Activated CD8-positive, alpha-beta memory T cell treated with anti-CD3 and anti-CD28 coated beads, Interleukin-2, amount 10 ng/mL, durations not matched to agents 7 days and 5 days (primary cell): ENCODE measurements at regions of chr3 and their contacts with region 1.

Region 1: GRCh38 chr3:33440323-33441232 is at the start of gene UBP1:
- DNase-seq: peak; percentile 99
- ATAC-seq: peak; percentile 89
- H3K4me3 Mint-ChIP-seq: peak within 1 kb of the TSS; percentile 95
- H3K27ac Mint-ChIP-seq: peak within 1 kb of the TSS; percentile 100
- H3K4me1 Mint-ChIP-seq: peaks cover 41% of the 10 kb centered on the region
- H3K27me3 Mint-ChIP-seq: no peaks in the 10 kb centered on the region
- total RNA-seq, gene UBP1: 60.5 to 71.8 TPM

Region 2: DNA sequence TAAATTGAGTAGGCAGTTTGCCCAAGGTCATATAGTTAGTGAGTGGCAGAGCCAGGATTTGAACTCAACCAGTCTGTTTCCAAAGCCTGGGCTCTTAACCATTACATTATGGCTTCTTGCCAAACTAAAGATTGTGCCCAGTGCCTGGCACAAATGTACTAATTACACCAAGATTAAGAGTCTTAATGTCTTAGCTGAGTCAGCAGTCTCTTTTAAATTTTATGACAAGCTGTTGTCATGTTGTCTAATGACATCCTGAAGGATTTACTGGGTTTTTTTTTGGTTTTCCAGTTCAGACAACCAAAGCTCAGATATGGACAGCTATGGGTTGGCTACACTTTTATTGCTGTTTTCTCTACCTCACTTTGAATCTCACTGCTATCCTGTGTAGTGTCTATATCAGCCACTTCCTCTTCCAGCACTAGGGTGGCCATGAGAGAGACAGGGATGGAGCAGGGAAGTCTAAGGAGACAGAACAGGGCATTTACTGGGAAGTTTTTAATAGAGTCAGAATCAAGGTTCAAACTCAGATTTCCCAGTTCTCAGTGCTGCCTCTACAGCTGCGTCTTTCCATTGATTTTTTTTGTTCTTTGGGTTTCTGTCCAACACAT is 152.8 kb before region 1 on chr3:
- CTCF ChIA-PET with region 1: no interaction called
- DNase-seq: no peak
- ATAC-seq: no peak
- H3K4me3 Mint-ChIP-seq: no peak overlapping the region
- H3K27ac Mint-ChIP-seq: no peak overlapping the region
- H3K4me1 Mint-ChIP-seq: no peaks in the 10 kb centered on the region
- H3K27me3 Mint-ChIP-seq: peaks cover 34% of the 10 kb centered on the region

Region 3: DNA sequence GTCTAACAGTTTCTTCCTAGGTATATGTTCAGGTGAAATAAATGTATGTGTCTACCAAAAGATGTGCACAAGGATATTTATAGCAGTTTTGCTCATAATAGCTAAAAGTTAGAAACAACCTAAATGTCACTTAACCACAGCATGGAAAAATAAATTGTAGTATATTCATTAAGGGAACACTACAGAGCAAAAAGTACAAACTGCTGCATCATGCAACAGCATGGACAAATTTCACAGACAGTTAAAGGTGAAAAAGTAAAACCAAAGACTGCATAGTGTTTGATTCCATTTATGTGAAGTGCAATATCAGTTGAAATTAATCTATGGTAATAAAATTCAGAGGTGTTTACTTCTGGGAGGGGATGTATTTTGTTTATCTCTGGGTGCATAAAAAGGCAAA is 100.8 kb before region 1 on chr3:
- CTCF ChIA-PET with region 1: no interaction called
- DNase-seq: no peak
- ATAC-seq: no peak
- H3K4me3 Mint-ChIP-seq: no peak overlapping the region
- H3K27ac Mint-ChIP-seq: no peak overlapping the region
- H3K4me1 Mint-ChIP-seq: no peaks in the 10 kb centered on the region
- H3K27me3 Mint-ChIP-seq: peaks cover 4% of the 10 kb centered on the region

Region 4: DNA sequence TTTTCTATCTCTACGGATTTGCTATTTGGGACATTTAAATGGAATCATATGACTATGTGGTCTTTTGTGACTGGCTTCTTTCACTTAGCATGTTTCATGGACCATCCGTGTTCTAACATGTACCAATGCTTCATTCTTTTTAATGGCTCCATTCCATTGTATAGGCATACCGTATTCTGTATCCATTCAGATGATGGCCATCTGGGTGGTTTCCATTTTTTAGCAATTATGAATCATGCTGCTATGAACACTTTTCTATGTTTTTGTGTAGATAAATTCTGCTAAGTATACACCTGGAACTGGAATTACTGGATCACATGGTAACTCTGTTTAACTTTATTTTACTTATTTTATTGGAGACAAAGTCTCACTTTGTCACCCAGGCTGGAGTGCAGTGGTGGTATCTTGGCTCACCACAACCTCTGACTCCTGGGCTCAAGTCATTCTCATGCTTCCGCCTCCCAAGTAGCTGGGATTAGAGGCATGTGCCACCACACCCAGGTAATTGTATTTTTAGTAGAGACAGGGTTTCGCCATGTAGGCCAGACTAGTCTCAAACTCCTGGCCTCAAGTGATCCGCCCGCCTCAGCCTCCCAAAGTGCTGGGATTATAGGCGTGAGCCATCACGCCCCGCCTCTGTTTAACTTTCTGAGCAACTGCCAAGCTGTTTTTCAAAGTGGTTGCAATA is 13.8 kb before region 1 on chr3:
- CTCF ChIA-PET with region 1: interaction called, 16 read pairs
- DNase-seq: no peak
- ATAC-seq: no peak
- H3K4me3 Mint-ChIP-seq: no peak overlapping the region
- H3K27ac Mint-ChIP-seq: no peak overlapping the region
- H3K4me1 Mint-ChIP-seq: peaks cover 36% of the 10 kb centered on the region
- H3K27me3 Mint-ChIP-seq: no peaks in the 10 kb centered on the region

Region 5: DNA sequence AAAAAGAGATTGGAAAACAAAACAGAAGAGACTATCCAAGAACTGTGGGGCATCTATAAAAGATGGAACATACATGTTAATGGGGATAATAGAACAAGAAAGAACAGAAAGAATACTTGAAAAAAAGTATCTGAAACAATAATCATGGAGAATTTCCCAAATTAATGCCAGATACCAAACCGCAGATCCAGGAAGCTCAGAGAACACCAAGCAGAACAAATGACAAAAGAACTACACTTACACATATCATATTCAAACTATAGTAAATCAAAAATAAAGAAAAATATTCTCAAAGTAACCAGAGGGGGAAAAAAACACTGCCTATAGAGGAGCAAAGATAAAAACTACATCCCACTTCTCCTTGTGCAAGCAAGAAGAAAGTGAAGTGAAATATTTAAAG is 237.5 kb after region 1 on chr3:
- CTCF ChIA-PET with region 1: no interaction called
- DNase-seq: no peak
- ATAC-seq: no peak
- H3K4me3 Mint-ChIP-seq: no peak overlapping the region
- H3K27ac Mint-ChIP-seq: no peak overlapping the region
- H3K4me1 Mint-ChIP-seq: peaks cover 2% of the 10 kb centered on the region
- H3K27me3 Mint-ChIP-seq: no peaks in the 10 kb centered on the region